GM13977 (cell line): ENCODE measurements at regions of chr1 and their contacts with region 1.

Region 1: GRCh38 chr1:40039757-40040510 is 595 bp upstream of the CAP1 start:
- DNase-seq: peak; percentile 83
- CTCF ChIP-seq: no peak

Region 2: GRCh38 chr1:39450956-39451606 is 588.9 kb before region 1 on chr1:
- in situ Hi-C with region 1: no loop called
- DNase-seq: no peak
- CTCF ChIP-seq: no peak

Region 3: GRCh38 chr1:39919545-39919944 is 120.4 kb before region 1 on chr1:
- in situ Hi-C with region 1: loop called (anchors 5 kb)
- DNase-seq: peak; percentile 86
- CTCF ChIP-seq: peak; percentile 78

Region 4: DNA sequence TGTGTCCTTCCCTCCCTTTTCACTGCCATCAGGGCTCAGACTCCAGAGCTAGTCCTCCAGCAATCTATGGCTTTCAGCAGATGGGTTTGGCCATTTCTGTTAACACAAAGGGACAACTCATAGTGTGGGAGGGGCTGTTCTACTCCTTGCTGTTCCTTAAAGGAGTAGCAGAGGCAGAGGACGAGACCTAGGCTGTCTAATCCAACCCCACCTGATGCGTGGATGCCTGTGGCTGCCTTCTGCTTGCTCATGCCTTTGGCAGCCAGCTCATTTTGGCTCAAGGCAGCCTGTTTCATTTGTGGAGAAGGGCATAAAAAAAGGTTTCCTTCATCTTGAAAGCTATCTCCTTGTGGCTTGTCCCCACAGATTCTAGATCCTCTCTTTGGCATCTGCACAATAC is 58.0 kb before region 1 on chr1:
- in situ Hi-C with region 1: loop called (anchors 10 kb)
- DNase-seq: no peak
- CTCF ChIP-seq: no peak

Region 5: DNA sequence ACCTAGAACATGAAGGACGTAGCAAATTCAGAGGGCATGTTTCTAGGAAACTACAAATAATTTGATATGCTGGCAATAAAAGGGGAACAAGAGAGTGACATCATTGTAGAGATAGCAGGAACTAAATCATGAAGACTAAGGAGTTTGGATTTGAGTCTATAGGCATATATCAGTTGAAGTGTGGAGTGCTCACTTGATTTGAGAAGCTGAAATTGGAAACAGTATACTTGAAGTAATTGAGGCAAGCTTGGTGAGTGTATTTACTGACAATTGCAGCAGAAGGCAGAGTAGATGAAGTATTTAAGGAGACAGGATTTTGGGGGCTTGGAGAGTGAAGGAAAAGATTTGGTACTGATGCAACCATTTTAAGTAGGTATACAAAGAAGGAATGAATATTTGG is 201.4 kb after region 1 on chr1:
- in situ Hi-C with region 1: no loop called
- DNase-seq: no peak
- CTCF ChIP-seq: no peak